ENCODE measurements at regions of chrX and their contacts with region 1.

Region 1: GRCh38 chrX:13653022-13653693 is at the start of gene TCEANC:
- DNase-seq: peak; percentile 97 to 99 (median 98)
- H3K4me3 ChIP-seq: peak within 1 kb of the TSS; percentile 59
- H3K27ac ChIP-seq: peak within 1 kb of the TSS; percentile 59 to 87
- H3K4me1 ChIP-seq: peaks cover 4% of the 10 kb centered on the region
- H3K27me3 ChIP-seq: no peaks in the 10 kb centered on the region
- CTCF ChIP-seq: peak in 1 of 3 donors; percentile 21
- EP300 ChIP-seq: no peak
- POLR2A ChIP-seq: peak; percentile 81
- total RNA-seq, gene TCEANC: 3.1 to 9.2 (median 4.8) TPM

Region 2: DNA sequence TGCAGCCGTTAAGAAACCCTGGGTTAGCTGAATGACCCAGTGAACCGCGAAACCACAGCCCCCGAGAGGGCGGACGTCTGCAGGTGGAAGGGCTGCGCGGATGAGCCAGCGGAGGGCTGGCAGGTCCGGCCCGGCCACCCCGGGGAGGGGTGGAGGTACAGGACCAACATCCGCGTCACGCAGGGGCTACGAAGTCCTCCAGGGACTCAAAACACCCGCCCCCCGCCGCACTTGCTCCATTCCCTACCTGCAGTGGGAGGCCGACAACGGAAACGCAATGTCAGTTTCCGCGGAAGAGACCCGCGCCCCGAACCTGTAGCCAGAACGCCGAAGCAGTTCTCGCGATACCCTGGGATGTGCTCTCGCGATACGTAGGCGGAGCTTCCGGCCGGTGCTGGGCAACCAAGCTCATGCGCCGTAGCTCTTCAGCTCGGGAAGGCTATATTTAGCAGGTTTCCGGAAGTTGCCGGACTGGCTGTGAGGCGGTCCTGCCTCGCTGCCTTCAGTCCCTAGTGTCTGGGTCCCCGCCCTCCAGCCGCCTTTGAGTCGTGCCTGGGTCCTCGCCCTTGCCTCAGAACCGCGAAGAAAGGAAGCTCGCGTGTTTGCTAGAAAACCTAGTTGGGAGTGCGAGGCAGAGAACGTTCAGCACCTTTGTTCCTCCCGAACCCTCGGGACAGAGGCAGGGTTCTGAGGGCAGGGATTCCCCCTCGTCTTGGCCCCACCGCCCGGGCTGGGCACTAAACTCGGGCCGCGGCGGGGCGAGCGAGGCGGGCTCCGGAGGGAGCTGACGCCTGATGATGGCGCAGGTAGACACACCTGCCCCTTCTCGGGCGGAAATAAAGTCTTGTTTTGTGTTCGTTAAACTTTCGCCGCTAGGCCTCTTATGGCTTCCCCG is 81.4 kb after region 1 on chrX and contains the starts of genes OFD1 and TRAPPC2:
- intact Hi-C with region 1: loop called in 1 of 4 experiments (anchors 10 kb)
- DNase-seq: peak; percentile 94 to 97 (median 96)
- H3K4me3 ChIP-seq: peak within 1 kb of the TSS; percentile 88
- H3K27ac ChIP-seq: peak within 1 kb of the TSS; percentile 50 to 77
- H3K4me1 ChIP-seq: peaks cover 1% of the 10 kb centered on the region
- H3K27me3 ChIP-seq: no peaks in the 10 kb centered on the region
- CTCF ChIP-seq: peak in 1 of 3 donors; percentile 34
- EP300 ChIP-seq: no peak
- POLR2A ChIP-seq: peak; percentile 96
- total RNA-seq, gene OFD1: 27.0 to 35.7 (median 33.7) TPM
- total RNA-seq, gene TRAPPC2: 18.6 to 26.5 (median 21.1) TPM